Tibial artery (tissue), 4 donors: ENCODE measurements at regions of chr3 and their contacts with region 1.

Region 1: DNA sequence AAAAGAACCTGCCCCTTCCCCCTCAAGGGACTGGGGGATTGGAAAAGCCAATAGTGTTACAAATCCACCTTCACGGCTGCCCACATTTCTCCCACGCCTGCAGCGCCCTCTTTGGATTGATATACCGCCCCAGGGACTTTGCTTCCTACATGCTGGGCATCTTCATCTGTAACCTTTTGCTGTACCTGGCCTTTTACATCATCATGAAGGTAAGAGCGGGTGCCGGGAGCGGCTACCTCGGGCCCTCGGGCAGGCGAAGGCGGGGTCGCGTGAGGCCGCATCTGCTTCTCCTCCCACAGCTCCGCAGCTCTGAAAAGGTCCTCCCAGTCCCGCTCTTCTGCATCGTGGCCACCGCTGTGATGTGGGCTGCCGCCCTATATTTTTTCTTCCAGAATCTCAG is 73.1 kb downstream of the USF3 start:
- DNase-seq: no peak
- H3K4me3 ChIP-seq: peak overlapping the region; percentile 15 to 37
- H3K27ac ChIP-seq: no peak overlapping the region
- H3K4me1 ChIP-seq: peaks cover 0 to 10% (median 4%) of the 10 kb centered on the region in 4 donors
- H3K27me3 ChIP-seq: no peaks in the 10 kb centered on the region
- CTCF ChIP-seq: no peak

Region 2: DNA sequence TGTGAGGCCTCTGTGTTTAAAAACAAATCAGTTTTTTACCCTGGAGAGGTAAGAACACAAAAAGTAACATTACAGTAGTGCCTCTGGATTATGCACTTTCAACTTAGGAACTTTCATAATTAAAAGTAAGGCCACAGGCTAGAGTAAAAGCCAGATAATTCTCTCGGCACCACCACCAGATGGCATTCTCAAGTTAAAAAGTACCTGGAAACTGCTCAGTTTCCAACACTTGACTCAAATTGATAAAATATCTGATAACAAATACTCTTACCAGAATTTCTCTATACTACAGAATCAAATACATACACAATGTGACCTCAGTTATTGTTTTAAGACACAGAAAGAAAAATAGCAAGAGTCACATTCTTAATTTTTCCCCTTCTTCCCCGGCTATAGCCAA is 128.3 kb before region 1 on chr3:
- intact Hi-C with region 1: loop called (anchors 5 kb)
- DNase-seq: no peak
- H3K4me3 ChIP-seq: no peak overlapping the region
- H3K27ac ChIP-seq: no peak overlapping the region
- H3K4me1 ChIP-seq: no peaks in the 10 kb centered on the region
- H3K27me3 ChIP-seq: no peaks in the 10 kb centered on the region
- CTCF ChIP-seq: peak; percentile 22 to 23